ENCODE measurements at regions of chr17 and their contacts with region 1.

Region 1: DNA sequence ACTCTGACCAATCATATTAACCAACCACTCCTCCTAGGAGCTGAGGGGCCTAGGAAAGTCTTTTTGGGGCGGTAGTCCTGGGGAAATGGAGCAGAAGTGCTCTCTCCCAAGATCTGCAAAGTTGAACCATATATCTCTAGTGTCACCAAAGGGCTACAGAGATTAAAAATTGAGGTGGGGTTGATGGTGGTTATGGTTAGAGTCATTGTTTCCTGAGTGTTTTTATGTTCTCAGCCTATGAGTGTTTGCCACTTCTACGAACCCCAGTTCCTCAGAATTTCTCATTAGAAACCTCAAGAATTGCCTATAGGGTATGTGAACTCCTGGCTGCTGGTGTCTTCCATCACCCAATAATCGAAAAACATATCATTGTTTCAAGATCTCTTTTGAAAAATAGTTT is 217.8 kb downstream of the CDRT15L2 start:
- DNase-seq: no peak
- H3K4me3 Mint-ChIP-seq: no peak overlapping the region
- H3K27ac Mint-ChIP-seq: no peak overlapping the region
- H3K4me1 Mint-ChIP-seq: no peaks in the 10 kb centered on the region
- H3K27me3 Mint-ChIP-seq: no peaks in the 10 kb centered on the region
- CTCF ChIP-seq: no peak

Region 2: GRCh38 chr17:20852239-20852989 is 55.1 kb after region 1 on chr17:
- CTCF ChIA-PET with region 1: interaction called, 6 read pairs
- POLR2A ChIA-PET with region 1: no interaction called
- intact Hi-C with region 1: loop called (anchors 2 kb)
- DNase-seq: peak; percentile 12
- H3K4me3 Mint-ChIP-seq: peak overlapping the region; percentile 58
- H3K27ac Mint-ChIP-seq: no peak overlapping the region
- H3K4me1 Mint-ChIP-seq: no peaks in the 10 kb centered on the region
- H3K27me3 Mint-ChIP-seq: peaks cover 11% of the 10 kb centered on the region
- CTCF ChIP-seq: no peak

Region 3: GRCh38 chr17:21113716-21114115 is 316.4 kb after region 1 on chr17:
- CTCF ChIA-PET with region 1: no interaction called
- POLR2A ChIA-PET with region 1: no interaction called
- intact Hi-C with region 1: no loop called
- DNase-seq: no peak
- H3K4me3 Mint-ChIP-seq: no peak overlapping the region
- H3K27ac Mint-ChIP-seq: no peak overlapping the region
- H3K4me1 Mint-ChIP-seq: no peaks in the 10 kb centered on the region
- H3K27me3 Mint-ChIP-seq: no peaks in the 10 kb centered on the region
- CTCF ChIP-seq: no peak

Region 4: DNA sequence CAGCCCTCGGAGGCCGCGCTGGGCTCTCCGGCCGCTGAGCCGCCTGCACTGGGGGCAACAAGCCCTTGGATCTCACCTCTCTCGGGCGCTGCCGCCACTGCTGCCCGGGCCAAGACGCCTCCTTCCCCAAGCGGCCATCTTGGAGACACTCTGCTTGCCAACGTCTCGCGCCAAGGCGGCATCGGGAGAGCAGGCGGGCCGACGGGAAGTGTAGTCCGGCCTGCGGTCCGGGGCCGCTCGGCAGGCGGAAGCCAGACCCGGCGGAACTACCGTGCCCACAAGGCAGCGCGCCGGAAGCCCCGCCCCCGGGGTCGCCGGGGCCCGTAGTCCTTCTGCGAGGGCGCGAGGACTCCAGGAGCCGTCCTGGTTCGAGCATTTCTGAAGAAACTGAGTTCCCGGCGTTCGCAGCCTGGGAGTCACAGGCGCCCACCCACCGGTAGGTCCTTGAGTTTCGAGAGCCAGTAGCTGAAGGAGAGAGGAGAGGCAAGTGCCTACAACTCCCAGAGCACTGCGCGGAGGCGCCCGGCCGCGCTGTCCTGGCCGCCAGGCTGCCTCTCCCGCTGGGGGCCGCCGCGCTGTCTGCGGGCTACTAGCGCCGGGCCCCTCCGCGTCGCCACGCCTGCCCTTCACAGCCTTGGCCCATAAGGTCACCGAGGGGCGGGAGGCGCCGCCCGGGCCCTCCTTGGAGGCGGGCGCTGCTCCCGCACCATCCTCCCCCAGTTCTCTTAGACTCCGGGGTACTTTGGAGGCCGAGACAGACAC is 416.9 kb after region 1 on chr17 and contains the start of gene TMEM11:
- CTCF ChIA-PET with region 1: no interaction called
- POLR2A ChIA-PET with region 1: no interaction called
- intact Hi-C with region 1: no loop called
- DNase-seq: peak; percentile 94
- H3K4me3 Mint-ChIP-seq: peak within 1 kb of the TSS; percentile 88
- H3K27ac Mint-ChIP-seq: peak within 1 kb of the TSS; percentile 96
- H3K4me1 Mint-ChIP-seq: peaks cover 39% of the 10 kb centered on the region
- H3K27me3 Mint-ChIP-seq: no peaks in the 10 kb centered on the region
- CTCF ChIP-seq: peak; percentile 6
- total RNA-seq, gene TMEM11: 27.8 and 33.5 TPM in 2 replicates

Measured in MCF 10A (cell line).